ENCODE measurements at regions of chrX and their contacts with region 1.

Region 1: DNA sequence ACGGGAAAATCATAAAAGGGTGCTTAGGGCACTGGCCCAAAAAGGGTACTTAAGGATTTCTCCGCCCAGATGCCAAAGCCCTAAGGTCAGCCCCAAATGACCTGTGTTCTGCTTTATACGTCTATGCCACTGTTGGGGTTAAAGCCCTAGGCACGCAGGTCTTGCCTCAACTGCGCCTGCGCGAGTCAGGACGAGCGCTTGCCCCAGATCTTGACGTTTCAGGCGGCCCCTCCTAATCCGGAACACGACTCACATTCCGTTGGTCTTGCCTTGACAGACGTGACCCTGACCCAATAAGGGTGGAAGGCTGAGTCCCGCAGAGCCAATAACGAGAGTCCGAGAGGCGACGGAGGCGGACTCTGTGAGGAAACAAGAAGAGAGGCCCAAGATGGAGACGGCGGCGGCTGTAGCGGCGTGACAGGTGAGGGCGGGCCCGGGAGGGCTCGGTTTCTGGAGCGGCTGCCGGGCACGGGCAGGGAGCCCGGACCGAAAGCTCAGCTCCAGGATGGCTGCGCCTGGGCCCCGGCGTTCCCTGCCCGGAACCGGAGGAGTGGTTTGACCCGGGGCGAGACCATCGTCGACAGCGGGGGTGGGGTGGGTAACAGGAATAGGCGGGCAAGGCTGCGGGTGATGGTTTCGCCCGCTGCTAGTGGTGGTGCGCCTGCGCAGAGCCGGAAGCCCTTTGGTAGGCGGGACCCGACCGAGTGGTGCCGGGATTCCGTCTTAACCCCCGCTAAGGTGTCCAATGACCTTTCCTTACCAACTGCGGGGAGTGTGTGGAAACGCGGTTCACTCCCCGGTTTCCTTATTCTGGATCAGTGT is at the start of gene ARAF:
- DNase-seq: peak; percentile 89 to 98
- ATAC-seq: peak; percentile 85 to 95 (median 88)
- H3K4me3 ChIP-seq: peak within 1 kb of the TSS; percentile 64
- H3K4me3 Mint-ChIP-seq: peak within 1 kb of the TSS; percentile 96
- H3K27ac ChIP-seq: peak within 1 kb of the TSS; percentile 97
- H3K27ac Mint-ChIP-seq: peak within 1 kb of the TSS; percentile 95 to 97
- H3K4me1 ChIP-seq: peaks cover 35% of the 10 kb centered on the region
- H3K4me1 Mint-ChIP-seq: peaks cover 17 to 41% of the 10 kb centered on the region in 2 donors
- H3K27me3 ChIP-seq: no peaks in the 10 kb centered on the region
- H3K27me3 Mint-ChIP-seq: no peaks in the 10 kb centered on the region
- CTCF ChIP-seq: no peak
- total RNA-seq, gene ARAF: 162 to 173 (median 169) TPM

Region 2: GRCh38 chrX:47619486-47620302 is 58.7 kb after region 1 on chrX and contains the start of gene SYN1:
- intact Hi-C with region 1: loop called (anchors 1 kb)
- DNase-seq: peak; percentile 79 to 93
- ATAC-seq: peak; percentile 94 to 97 (median 97)
- H3K4me3 ChIP-seq: no peak within 1 kb of the TSS
- H3K4me3 Mint-ChIP-seq: peak within 1 kb of the TSS; percentile 17
- H3K27ac ChIP-seq: no peak within 1 kb of the TSS
- H3K27ac Mint-ChIP-seq: no peak within 1 kb of the TSS
- H3K4me1 ChIP-seq: peaks cover 15% of the 10 kb centered on the region
- H3K4me1 Mint-ChIP-seq: peaks cover 0 to 6% of the 10 kb centered on the region in 2 donors
- H3K27me3 ChIP-seq: peaks cover 19% of the 10 kb centered on the region
- H3K27me3 Mint-ChIP-seq: peaks cover 55 to 58% of the 10 kb centered on the region in 2 donors
- CTCF ChIP-seq: no peak
- total RNA-seq, gene SYN1: 0.40 TPM in 1 of 3 donors, not detected in the others

Region 3: DNA sequence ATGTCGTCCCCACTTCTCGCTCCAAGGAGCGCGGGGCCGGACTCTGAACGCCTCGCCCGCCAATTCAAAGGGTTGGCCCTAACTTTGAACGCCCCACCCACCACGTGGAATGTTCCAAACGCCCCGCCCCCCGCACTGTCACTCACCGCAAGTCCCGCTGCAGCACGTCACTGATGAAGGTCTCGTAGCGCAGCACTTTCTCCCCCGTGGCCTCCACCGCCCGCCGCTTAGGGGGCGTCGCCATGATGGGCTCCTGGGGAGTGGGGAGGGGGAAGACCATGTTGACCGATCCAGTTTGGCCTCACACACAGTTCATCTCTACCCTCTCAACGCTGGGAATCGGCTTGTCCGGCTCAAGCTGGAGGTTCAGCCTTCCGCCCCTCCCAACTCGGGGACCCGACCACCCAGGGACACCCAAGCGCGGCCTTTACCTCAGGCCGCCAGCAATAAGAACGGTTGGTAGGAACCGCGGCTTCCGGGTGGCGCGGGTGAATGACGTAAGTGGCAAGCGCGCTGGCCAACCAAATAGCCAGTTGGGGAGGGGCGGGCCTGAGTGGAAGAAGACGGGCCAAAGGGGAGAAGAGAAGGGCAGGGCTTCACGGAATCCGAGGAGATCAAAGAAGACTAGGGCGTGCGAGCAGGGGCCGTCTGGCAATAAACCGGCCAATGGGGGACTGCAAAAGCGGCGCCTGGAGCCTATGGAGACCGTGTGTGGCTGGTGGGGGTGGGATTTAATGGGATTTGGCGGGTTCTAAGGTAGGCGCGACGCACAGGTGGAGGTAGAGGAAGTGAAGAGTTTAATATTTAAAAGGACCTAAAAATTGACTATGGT is 97.9 kb after region 1 on chrX and contains the start of gene UXT:
- intact Hi-C with region 1: loop called (anchors 2 kb)
- DNase-seq: peak; percentile 85 to 94
- ATAC-seq: peak; percentile 81 to 92 (median 82)
- H3K4me3 ChIP-seq: peak within 1 kb of the TSS; percentile 89
- H3K4me3 Mint-ChIP-seq: peak within 1 kb of the TSS; percentile 83
- H3K27ac ChIP-seq: peak within 1 kb of the TSS; percentile 99
- H3K27ac Mint-ChIP-seq: peak within 1 kb of the TSS; percentile 93
- H3K4me1 ChIP-seq: peaks cover 8% of the 10 kb centered on the region
- H3K4me1 Mint-ChIP-seq: peaks cover 0 to 8% of the 10 kb centered on the region in 2 donors
- H3K27me3 ChIP-seq: no peaks in the 10 kb centered on the region
- H3K27me3 Mint-ChIP-seq: peaks cover 0 to 5% of the 10 kb centered on the region in 2 donors
- CTCF ChIP-seq: no peak
- total RNA-seq, gene UXT: 88.2 to 102 (median 95.4) TPM

Region 4: GRCh38 chrX:47836164-47837072 is 275.4 kb after region 1 on chrX and contains the start of gene ZNF81:
- intact Hi-C with region 1: loop called (anchors 10 kb)
- DNase-seq: peak; percentile 87 to 95
- ATAC-seq: peak; percentile 88 to 94 (median 90)
- H3K4me3 ChIP-seq: peak within 1 kb of the TSS; percentile 74
- H3K4me3 Mint-ChIP-seq: peak within 1 kb of the TSS; percentile 91
- H3K27ac ChIP-seq: peak within 1 kb of the TSS; percentile 79
- H3K27ac Mint-ChIP-seq: peak within 1 kb of the TSS; percentile 93 to 99
- H3K4me1 ChIP-seq: peaks cover 4% of the 10 kb centered on the region
- H3K4me1 Mint-ChIP-seq: peaks cover 20% of the 10 kb centered on the region in 2 donors
- H3K27me3 ChIP-seq: no peaks in the 10 kb centered on the region
- H3K27me3 Mint-ChIP-seq: peaks cover 0 to 7% of the 10 kb centered on the region in 2 donors
- CTCF ChIP-seq: no peak
- total RNA-seq, gene ZNF81: 20.9 to 23.7 (median 21.2) TPM

Measured in natural killer cell (primary cell).